ENCODE measurements at regions of chr7 and their contacts with region 1.

Region 1: DNA sequence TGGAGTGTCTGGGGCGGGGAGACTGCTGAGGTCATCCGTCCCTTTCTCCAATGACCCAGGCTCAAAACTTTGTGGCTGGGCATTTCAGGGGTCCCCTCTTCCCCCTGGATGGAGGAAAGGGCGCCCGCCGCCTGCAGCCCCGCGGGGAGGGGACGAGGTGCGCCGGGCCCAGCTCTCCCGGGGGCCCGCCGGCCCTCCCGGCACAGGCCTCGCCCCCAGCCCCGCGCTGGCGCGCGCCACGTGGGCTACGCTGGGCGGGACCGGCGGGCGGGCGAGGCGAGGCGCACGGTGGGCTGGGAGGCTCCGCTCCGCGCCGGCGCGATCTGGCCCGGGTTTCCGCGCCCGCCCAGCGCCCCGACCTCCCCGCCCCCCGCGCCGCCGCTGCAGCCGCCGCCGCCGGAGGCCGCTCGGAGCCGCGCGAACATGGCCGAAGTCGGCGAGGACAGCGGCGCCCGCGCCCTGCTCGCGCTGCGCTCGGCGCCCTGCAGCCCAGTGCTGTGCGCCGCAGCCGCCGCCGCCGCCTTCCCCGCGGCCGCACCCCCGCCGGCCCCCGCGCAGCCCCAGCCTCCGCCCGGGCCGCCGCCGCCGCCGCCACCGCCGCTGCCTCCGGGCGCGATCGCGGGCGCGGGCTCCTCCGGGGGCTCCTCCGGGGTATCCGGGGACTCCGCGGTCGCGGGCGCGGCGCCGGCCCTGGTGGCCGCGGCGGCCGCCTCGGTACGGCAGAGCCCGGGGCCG is at the start of gene FOXK1:
- DNase-seq: peak; percentile 83
- total RNA-seq, gene FOXK1: 29.7 TPM

Region 2: GRCh38 chr7:4744391-4745264 is 62.6 kb after region 1 on chr7:
- intact Hi-C with region 1: loop called (anchors 2 kb)
- DNase-seq: peak; percentile 98

Measured in cardiac septum (tissue), 1 donor.